CD14-positive monocyte (primary cell): ENCODE measurements at regions of chr9 and their contacts with region 1.

Region 1: DNA sequence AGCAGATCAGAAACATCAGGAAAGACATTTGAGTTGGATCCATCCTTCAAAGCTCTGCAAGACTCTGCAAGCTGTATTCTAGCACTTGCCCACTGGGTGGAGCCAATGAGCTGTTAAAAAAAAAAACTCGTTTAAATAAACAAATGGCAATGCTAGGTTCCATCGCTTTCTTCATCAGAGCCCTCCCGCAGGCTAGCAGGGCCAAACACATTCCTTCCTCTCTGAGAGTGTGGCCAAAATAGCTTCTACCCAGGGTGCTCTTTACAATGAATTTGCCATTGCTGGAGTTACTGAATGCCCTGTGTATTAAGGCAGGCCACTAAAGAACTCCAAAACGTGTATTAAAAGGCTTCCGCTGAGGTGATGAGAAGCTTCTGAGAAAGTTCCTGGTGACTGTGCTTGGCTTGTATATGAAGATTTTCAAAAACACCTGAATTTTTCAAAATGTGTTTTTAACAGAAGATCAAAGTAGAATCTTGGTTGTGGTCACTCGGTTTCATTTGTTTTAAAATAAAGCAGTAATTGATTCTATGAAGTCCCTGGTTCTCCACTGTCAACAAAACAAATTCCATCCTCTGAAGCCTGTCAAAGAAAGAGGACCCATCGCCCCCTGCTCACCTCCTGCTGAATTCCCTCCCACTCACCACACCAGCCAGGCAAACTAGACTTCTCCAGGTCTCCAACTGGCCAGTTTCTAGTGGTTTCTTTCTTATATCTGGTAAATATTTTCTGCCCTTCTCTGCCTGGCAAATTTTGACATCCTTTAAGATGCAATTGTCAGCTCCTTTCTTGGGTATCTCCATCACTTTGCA is 36.5 kb upstream of the EQTN start:
- DNase-seq: peak; percentile 59 to 76 (median 71)
- H3K4me3 ChIP-seq: no peak overlapping the region
- H3K4me3 Mint-ChIP-seq: no peak overlapping the region
- H3K27ac ChIP-seq: no peak overlapping the region
- H3K27ac Mint-ChIP-seq: peak overlapping the region in 6 of 7 donors; percentile 42 to 88 (median 52)
- H3K4me1 ChIP-seq: peaks cover 35 to 37% of the 10 kb centered on the region in 2 donors
- H3K4me1 Mint-ChIP-seq: peaks cover 39% of the 10 kb centered on the region
- H3K27me3 ChIP-seq: no peaks in the 10 kb centered on the region
- H3K27me3 Mint-ChIP-seq: peaks cover 0 to 4% (median 3%) of the 10 kb centered on the region in 3 donors
- CTCF ChIP-seq: peak; percentile 92

Region 2: DNA sequence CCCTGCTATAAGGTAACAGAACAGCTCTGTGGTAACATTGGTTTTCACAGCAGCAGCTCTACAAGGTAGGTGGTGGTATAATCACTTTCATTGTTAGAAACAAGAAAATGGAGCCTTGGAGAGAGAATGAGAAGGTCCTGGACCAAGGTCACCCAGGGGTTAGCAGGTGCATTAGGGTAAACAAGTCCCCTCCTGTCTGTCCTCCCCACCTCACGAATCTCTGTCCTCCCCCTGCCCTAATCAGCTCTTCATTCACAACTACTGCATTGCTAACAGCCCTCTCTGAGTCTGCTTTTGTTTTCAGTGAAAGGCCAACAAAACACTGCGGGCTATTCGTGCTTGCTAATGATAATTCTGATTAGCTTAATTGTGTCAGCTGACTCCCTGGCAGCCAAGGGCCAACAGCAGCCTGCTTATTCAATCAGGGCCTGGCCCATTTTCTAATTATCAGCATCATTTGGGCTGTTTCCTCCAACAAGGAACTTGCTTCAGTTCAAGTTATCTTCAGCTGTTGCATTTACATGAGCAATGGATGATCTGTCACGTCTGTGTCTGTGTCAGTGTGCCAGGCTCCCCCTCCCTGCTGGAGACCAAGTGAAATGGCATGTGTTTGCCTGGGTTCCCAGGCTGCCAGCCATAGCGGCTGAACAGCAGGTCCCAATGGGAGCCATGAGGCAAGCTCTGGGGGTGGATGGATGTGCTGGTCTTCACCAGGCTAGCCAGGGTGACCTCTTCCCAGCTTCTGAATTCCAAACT is 20.2 kb after region 1 on chr9:
- intact Hi-C with region 1: loop called in 1 of 2 experiments (anchors 2 kb)
- DNase-seq: peak; percentile 22 to 58 (median 30)
- H3K4me3 ChIP-seq: no peak overlapping the region
- H3K4me3 Mint-ChIP-seq: no peak overlapping the region
- H3K27ac ChIP-seq: peak overlapping the region in 1 of 2 donors; percentile 56
- H3K27ac Mint-ChIP-seq: peak overlapping the region in 6 of 7 donors; percentile 57 to 91 (median 86)
- H3K4me1 ChIP-seq: peaks cover 46 to 47% of the 10 kb centered on the region in 2 donors
- H3K4me1 Mint-ChIP-seq: peaks cover 52% of the 10 kb centered on the region
- H3K27me3 ChIP-seq: no peaks in the 10 kb centered on the region
- H3K27me3 Mint-ChIP-seq: peaks cover 0 to 4% (median 3%) of the 10 kb centered on the region in 3 donors
- CTCF ChIP-seq: no peak

Region 3: GRCh38 chr9:27365707-27366376 is 32.4 kb after region 1 on chr9:
- intact Hi-C with region 1: loop called in 1 of 2 experiments (anchors 5 kb)
- DNase-seq: no peak
- H3K4me3 ChIP-seq: no peak overlapping the region
- H3K4me3 Mint-ChIP-seq: no peak overlapping the region
- H3K27ac ChIP-seq: no peak overlapping the region
- H3K27ac Mint-ChIP-seq: peak overlapping the region in 2 of 7 donors; percentile 11 to 39
- H3K4me1 ChIP-seq: peaks cover 10 to 27% of the 10 kb centered on the region in 2 donors
- H3K4me1 Mint-ChIP-seq: peaks cover 36% of the 10 kb centered on the region
- H3K27me3 ChIP-seq: no peaks in the 10 kb centered on the region
- H3K27me3 Mint-ChIP-seq: peaks cover 0 to 3% (median 2%) of the 10 kb centered on the region in 3 donors
- CTCF ChIP-seq: no peak

Region 4: GRCh38 chr9:27436234-27436633 is 102.8 kb after region 1 on chr9:
- intact Hi-C with region 1: no loop called
- DNase-seq: no peak
- H3K4me3 ChIP-seq: no peak overlapping the region
- H3K4me3 Mint-ChIP-seq: no peak overlapping the region
- H3K27ac ChIP-seq: no peak overlapping the region
- H3K27ac Mint-ChIP-seq: no peak overlapping the region
- H3K4me1 ChIP-seq: peaks cover 16 to 17% of the 10 kb centered on the region in 2 donors
- H3K4me1 Mint-ChIP-seq: peaks cover 15% of the 10 kb centered on the region
- H3K27me3 ChIP-seq: no peaks in the 10 kb centered on the region
- H3K27me3 Mint-ChIP-seq: peaks cover 0 to 1% (median 0%) of the 10 kb centered on the region in 3 donors
- CTCF ChIP-seq: no peak

Region 5: GRCh38 chr9:27460226-27461023 is 127.0 kb after region 1 on chr9:
- intact Hi-C with region 1: loop called in 1 of 2 experiments (anchors 5 kb)
- DNase-seq: peak; percentile 80 to 95 (median 91)
- H3K4me3 ChIP-seq: no peak overlapping the region
- H3K4me3 Mint-ChIP-seq: peak overlapping the region in 1 of 2 donors; percentile 6
- H3K27ac ChIP-seq: peak overlapping the region in 1 of 2 donors; percentile 38
- H3K27ac Mint-ChIP-seq: peak overlapping the region; percentile 78 to 93 (median 89)
- H3K4me1 ChIP-seq: peaks cover 19 to 22% of the 10 kb centered on the region in 2 donors
- H3K4me1 Mint-ChIP-seq: peaks cover 24% of the 10 kb centered on the region
- H3K27me3 ChIP-seq: no peaks in the 10 kb centered on the region
- H3K27me3 Mint-ChIP-seq: peaks cover 0 to 2% (median 2%) of the 10 kb centered on the region in 3 donors
- CTCF ChIP-seq: no peak

Region 6: GRCh38 chr9:27529316-27530278 is 196.2 kb after region 1 on chr9 and contains the start of gene MOB3B:
- intact Hi-C with region 1: loop called in 1 of 2 experiments (anchors 2 kb)
- DNase-seq: peak; percentile 41 to 72 (median 60)
- H3K4me3 ChIP-seq: peak within 1 kb of the TSS; percentile 54 to 88 (median 68)
- H3K4me3 Mint-ChIP-seq: peak within 1 kb of the TSS; percentile 95
- H3K27ac ChIP-seq: peak within 1 kb of the TSS; percentile 50 to 86
- H3K27ac Mint-ChIP-seq: peak within 1 kb of the TSS; percentile 79 to 95 (median 91)
- H3K4me1 ChIP-seq: peaks cover 19 to 23% of the 10 kb centered on the region in 2 donors
- H3K4me1 Mint-ChIP-seq: peaks cover 25% of the 10 kb centered on the region
- H3K27me3 ChIP-seq: peaks cover 0 to 8% of the 10 kb centered on the region in 2 donors
- H3K27me3 Mint-ChIP-seq: peaks cover 8 to 15% (median 13%) of the 10 kb centered on the region in 3 donors
- CTCF ChIP-seq: peak; percentile 98
- polyA plus RNA-seq, gene MOB3B: 1.2 to 2.2 (median 1.4) TPM

Region 7: DNA sequence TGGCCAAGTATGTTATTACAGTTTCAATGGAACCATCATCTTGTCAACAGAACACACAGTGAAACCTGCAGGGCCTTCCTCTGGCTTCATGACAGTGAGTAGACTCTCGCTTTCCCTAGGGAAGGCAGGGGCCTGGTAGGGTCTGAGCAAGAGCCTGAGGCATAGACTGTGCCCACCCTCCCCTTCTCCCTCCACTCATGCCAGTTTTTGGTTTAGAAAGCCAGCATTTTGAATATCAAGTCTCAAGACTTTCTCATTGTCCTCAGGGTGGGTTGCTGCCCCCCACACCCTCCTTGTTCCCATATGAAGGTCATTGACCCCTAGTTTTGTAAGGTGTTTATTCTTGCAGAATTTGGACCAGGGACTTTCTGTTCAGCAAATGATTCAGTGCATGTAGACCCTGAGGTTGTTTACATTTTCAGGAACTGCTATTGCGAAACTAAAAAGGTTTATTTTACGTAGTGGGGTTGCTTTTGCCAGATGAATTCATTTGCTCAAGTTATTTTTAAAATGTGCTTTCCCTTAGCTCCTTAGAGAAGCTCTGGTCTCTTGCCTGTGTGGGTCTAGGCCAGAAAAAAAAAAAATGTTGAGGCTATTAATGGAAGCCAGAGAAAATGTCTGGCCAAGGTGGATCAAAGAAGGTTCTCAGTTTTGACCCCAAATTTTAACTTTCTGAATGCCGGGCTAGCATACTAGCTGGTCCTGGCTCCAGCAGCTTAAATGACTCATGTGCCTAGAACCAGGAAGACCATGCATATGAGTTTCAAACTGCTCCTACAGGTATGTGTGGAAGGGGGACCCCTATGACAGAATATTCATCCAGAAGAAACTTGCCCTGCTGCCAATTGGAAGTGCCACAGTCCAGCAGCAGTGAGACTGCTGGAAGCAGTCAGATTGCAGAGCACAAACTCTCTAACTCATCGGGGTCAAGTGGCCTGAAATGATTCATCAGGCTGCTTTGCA is 206.3 kb after region 1 on chr9:
- intact Hi-C with region 1: loop called in 1 of 2 experiments (anchors 2 kb)
- DNase-seq: peak; percentile 34 to 70 (median 48)
- H3K4me3 ChIP-seq: no peak overlapping the region
- H3K4me3 Mint-ChIP-seq: no peak overlapping the region
- H3K27ac ChIP-seq: peak overlapping the region; percentile 45 to 79
- H3K27ac Mint-ChIP-seq: peak overlapping the region; percentile 59 to 93 (median 88)
- H3K4me1 ChIP-seq: peaks cover 19 to 22% of the 10 kb centered on the region in 2 donors
- H3K4me1 Mint-ChIP-seq: peaks cover 30% of the 10 kb centered on the region
- H3K27me3 ChIP-seq: no peaks in the 10 kb centered on the region
- H3K27me3 Mint-ChIP-seq: no peaks in the 10 kb centered on the region
- CTCF ChIP-seq: no peak

Region 8: DNA sequence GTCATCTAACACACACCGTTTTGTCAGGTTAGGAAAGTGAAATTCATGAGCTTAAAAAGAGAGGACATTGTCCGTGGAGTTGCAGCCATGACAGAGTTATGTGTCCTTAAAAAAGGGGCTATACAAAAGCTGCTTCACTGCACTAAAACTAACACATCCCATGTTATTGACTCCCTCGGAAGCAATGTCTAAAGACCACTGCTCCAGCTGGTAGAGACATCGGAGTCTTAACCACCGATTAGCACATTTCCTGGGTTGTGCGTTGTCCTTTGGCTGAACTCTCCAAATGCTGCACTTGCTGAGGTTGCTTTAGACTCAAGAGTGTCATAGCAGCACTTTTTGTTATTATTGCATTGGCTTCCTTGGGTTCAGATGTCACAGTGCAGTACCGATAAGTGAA is 368.1 kb after region 1 on chr9:
- intact Hi-C with region 1: loop called (anchors 10 kb)
- DNase-seq: peak; percentile 62 to 79 (median 78)
- H3K4me3 ChIP-seq: peak overlapping the region; percentile 10 to 65 (median 49)
- H3K4me3 Mint-ChIP-seq: peak overlapping the region; percentile 61 to 67
- H3K27ac ChIP-seq: peak overlapping the region in 1 of 2 donors; percentile 86
- H3K27ac Mint-ChIP-seq: peak overlapping the region; percentile 90 to 99 (median 95)
- H3K4me1 ChIP-seq: peaks cover 30 to 41% of the 10 kb centered on the region in 2 donors
- H3K4me1 Mint-ChIP-seq: peaks cover 40% of the 10 kb centered on the region
- H3K27me3 ChIP-seq: no peaks in the 10 kb centered on the region
- H3K27me3 Mint-ChIP-seq: peaks cover 0 to 4% (median 0%) of the 10 kb centered on the region in 3 donors
- CTCF ChIP-seq: no peak